Right ventricle myocardium inferior (tissue), 1 donor: ENCODE measurements at regions of chr12 and their contacts with region 1.

Region 1: GRCh38 chr12:46617167-46617566 is 208.6 kb downstream of the SLC38A4 start:
- DNase-seq: no peak
- ATAC-seq: peak; percentile 100

Region 2: GRCh38 chr12:46089407-46090157 is 527.6 kb before region 1 on chr12:
- intact Hi-C with region 1: no loop called
- DNase-seq: no peak
- ATAC-seq: no peak

Region 3: DNA sequence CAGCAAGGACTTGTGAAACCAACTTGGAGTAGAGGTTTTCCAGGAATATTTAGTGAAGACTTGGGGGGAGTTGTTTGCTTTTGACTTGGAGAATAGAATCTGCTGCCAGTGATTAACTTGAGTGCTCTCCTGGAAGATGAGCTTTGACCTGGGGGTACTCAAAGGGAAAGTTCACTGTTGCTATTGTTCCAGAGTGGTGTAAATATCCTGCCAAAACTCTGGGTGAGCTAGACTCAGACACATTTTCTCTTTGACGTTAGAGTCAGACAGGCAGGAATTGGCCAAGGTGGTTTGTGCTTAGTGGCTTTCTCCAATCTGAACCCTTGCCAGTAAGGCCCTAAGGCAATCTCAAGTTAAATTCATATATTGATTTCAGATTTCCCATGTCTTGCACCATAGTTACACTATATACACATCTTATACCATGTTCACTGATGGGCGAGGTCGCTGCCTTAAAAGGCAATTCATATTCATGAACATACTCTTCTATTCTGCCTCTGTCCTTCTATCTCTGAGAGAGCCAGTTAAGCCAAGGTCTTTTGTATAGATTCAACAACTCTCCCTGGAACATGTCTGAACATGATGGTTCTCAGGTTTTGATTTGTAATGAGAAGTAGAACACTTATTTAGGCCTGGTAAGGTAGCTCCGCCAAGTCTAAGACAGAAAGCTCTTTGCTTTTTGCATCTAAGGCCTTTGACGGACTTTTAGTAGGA is 39.9 kb before region 1 on chr12:
- intact Hi-C with region 1: loop called (anchors 5 kb)
- DNase-seq: no peak
- ATAC-seq: no peak

Region 4: DNA sequence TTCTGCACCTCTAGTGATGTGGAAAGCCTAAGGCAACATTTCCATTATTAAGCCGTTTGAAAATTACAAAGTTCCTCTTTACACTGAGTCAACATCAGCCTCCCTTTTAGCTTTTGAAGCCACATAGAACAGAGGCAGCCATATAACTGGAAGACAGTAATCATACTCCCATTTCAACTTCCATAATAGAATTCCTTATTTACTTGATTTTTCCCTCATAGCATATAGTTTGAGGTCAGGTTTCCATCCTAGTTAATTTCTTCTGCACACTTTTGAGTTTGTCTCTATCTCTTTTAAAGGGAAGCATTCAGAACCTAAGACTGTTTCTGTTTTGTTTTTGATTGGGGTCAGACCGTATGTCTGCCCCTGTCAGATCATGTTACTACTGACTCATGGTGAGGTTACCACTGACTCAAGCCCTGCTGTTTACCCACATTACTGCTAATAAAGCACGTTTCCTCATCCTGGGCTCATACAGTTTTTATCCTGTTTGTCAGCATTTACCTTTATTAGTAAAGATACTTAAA is 47.7 kb after region 1 on chr12:
- intact Hi-C with region 1: no loop called
- DNase-seq: no peak
- ATAC-seq: no peak